ENCODE measurements at regions of chr11 and their contacts with region 1.

Region 1: GRCh38 chr11:8365216-8365941 is 101.7 kb upstream of the LMO1 start:
- DNase-seq: peak; percentile 23 to 42 (median 38)
- ATAC-seq: peak; percentile 79
- H3K4me3 ChIP-seq: no peak overlapping the region
- H3K27ac ChIP-seq: no peak overlapping the region
- H3K4me1 ChIP-seq: no peaks in the 10 kb centered on the region
- H3K27me3 ChIP-seq: peaks cover 7 to 43% of the 10 kb centered on the region in 2 experiments; a peak in 2 of 5 replicates
- CTCF ChIP-seq: peak; percentile 33 to 54 (median 41)
- EP300 ChIP-seq: no peak
- POLR2A ChIP-seq: no peak
- RAD21 ChIP-seq: no peak

Region 2: GRCh38 chr11:10293423-10294289 is 1928.3 kb after region 1 on chr11 and contains the start of gene SBF2:
- CTCF ChIA-PET with region 1: no interaction called
- POLR2A ChIA-PET with region 1: no interaction called
- in situ Hi-C with region 1: loop called (anchors 10 kb)
- intact Hi-C with region 1: no loop called
- DNase-seq: peak; percentile 86 to 91 (median 88)
- ATAC-seq: peak; percentile 90
- H3K4me3 ChIP-seq: peak within 1 kb of the TSS; percentile 96
- H3K27ac ChIP-seq: peak within 1 kb of the TSS; percentile 68; the same call in 2 of the 3 replicates
- H3K4me1 ChIP-seq: peaks cover 10 to 26% of the 10 kb centered on the region in 2 experiments; a peak in 3 of 5 replicates
- H3K27me3 ChIP-seq: no peaks in the 10 kb centered on the region; a peak in 1 of 5 replicates
- CTCF ChIP-seq: no peak
- EP300 ChIP-seq: no peak
- POLR2A ChIP-seq: no peak; the same call in 1 of the 2 replicates
- RAD21 ChIP-seq: no peak
- polyA plus RNA-seq, gene SBF2: 0.80 to 2.2 TPM

Measured in K562 (cell line).